ENCODE measurements at regions of chr20 and their contacts with region 1.

Region 1: GRCh38 chr20:51767010-51767558 is 1.1 kb downstream of the ATP9A start:
- DNase-seq: peak; percentile 83
- ATAC-seq: peak; percentile 97

Region 2: DNA sequence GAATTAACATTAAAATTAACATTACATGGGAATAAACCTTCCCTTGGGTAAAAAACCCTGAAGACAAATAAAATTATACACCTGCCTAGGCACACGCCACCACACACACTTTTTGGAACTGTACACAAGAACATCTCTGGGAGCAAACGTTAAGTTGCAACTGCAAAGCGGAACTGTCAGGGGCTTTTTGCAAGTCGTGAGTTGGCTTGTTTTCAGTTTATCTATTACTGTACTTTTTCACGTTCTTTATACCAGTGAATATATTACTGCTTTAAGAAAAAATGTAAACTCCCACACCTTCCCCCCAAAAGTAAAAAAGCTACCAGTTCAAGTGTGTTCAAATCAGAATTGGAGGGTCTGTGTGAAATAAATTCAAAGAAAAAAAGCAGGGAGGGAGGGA is 159.0 kb before region 1 on chr20:
- intact Hi-C with region 1: no loop called
- DNase-seq: no peak
- ATAC-seq: no peak

Region 3: DNA sequence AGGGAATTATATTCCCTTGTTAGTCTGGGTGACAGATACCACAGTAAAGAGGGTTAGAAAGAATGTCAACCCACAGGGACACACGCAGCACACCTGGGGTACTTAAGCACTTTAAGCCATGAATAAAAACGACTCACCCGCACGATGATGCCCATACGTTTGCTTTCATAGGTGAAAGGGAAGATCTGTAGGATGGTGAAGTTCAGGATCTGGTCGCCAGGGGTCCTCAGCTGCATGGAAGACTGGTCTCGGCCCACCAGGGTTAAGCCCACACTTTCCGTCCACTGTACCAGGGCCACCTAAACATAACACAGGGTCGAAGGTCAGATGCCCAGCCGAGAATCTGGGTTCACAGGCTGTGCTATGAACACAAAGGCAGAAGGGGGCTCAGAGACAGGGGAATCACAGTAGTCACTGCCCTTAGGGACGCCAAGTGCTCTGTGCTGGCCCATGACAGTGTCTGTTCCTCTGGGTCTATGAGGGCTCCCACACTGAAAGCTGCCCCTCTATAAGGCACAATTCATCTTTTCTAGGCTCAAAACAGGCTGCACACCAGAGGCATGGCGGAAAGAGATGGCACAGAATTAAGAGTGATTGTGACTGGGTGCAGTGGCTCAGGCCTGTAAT is 127.8 kb before region 1 on chr20:
- intact Hi-C with region 1: loop called (anchors 5 kb)
- DNase-seq: peak; percentile 70
- ATAC-seq: peak; percentile 77

Region 4: GRCh38 chr20:51953731-51954340 is 186.8 kb after region 1 on chr20:
- intact Hi-C with region 1: no loop called
- DNase-seq: no peak
- ATAC-seq: no peak

Measured in left ventricle myocardium superior (tissue), 1 donor.